ENCODE measurements at regions of chr15 and their contacts with region 1.

Region 1: GRCh38 chr15:34514251-34514670 is 69.2 kb downstream of the GOLGA8B start:
- DNase-seq: no peak
- ATAC-seq: peak; percentile 81
- H3K4me3 ChIP-seq: peak overlapping the region; percentile 52 to 81 (median 73)
- H3K27ac ChIP-seq: peak overlapping the region; percentile 38
- H3K4me1 ChIP-seq: peaks cover 33% of the 10 kb centered on the region
- H3K27me3 ChIP-seq: no peaks in the 10 kb centered on the region; a peak in 3 of 5 replicates
- CTCF ChIP-seq: no peak
- EP300 ChIP-seq: no peak
- POLR2A ChIP-seq: no peak
- RAD21 ChIP-seq: no peak

Region 2: DNA sequence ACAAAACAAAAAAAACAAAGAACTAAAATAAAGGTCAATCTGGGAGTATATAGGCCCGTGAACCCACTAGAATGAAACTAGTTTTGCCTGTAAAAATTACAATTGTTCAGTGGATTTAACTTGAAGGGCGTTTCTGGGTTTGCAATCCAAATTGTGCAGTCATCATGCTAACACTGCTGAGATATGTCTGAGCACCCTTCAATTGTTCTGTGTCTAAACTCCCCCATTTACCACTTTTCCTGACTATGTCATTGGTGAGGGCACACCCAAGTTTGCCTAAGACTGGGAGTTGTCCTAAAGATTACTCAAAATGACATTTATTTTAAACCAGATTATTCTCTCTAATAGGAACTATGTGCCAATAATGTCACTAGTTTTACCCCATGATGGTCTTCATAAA is 234.9 kb before region 1 on chr15:
- CTCF ChIA-PET with region 1: no interaction called
- POLR2A ChIA-PET with region 1: no interaction called
- in situ Hi-C with region 1: no loop called
- intact Hi-C with region 1: no loop called
- DNase-seq: no peak
- ATAC-seq: no peak
- H3K4me3 ChIP-seq: no peak overlapping the region
- H3K27ac ChIP-seq: no peak overlapping the region
- H3K4me1 ChIP-seq: no peaks in the 10 kb centered on the region
- H3K27me3 ChIP-seq: no peaks in the 10 kb centered on the region
- CTCF ChIP-seq: no peak
- EP300 ChIP-seq: no peak
- POLR2A ChIP-seq: no peak
- RAD21 ChIP-seq: no peak

Region 3: GRCh38 chr15:34470091-34470490 is 44.2 kb before region 1 on chr15:
- CTCF ChIA-PET with region 1: no interaction called
- POLR2A ChIA-PET with region 1: no interaction called
- in situ Hi-C with region 1: no loop called
- intact Hi-C with region 1: no loop called
- DNase-seq: no peak
- ATAC-seq: no peak
- H3K4me3 ChIP-seq: no peak overlapping the region
- H3K27ac ChIP-seq: no peak overlapping the region
- H3K4me1 ChIP-seq: peaks cover 18% of the 10 kb centered on the region
- H3K27me3 ChIP-seq: peaks cover 0 to 1% of the 10 kb centered on the region in 2 experiments; a peak in 1 of 5 replicates
- CTCF ChIP-seq: no peak
- EP300 ChIP-seq: no peak
- POLR2A ChIP-seq: no peak
- RAD21 ChIP-seq: no peak

Region 4: DNA sequence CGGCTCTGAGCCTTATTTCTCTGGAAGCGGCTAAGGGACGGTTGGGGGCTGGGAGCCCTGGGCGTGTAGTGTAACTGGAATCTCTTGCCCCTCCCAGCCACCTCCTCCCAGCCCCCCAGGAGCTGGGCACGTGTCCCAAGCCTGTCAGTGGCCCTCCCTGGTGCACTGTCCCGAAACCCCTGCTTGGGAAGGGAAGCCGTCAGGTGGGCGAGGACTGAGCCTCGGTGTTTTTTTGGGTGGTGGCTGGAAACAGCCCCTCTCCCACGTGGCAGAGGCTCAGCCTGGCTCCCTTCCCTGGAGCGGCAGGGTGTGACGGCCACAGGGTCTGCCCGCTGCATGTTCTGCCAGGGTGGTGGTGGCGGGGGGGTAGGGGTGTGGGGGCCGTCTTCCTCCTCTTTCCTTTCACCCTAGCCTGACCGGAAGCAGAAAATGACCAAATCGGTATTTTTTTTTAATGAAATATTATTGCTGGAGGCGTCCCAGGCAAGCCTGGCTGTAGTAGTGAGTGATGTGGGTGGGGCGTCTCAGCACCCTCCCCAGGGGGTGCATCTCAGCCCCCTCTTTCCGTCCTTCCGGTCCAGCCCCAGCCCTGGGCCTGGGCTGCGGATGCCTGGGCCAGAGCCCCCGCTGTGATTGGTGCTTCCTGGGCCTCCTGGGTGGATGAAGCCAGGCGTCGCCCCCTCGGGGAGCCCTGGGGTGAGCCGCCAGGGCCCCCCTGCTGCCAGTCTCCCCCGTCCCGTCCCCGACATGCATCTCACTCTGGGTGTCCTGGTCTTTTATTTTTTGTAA is 17.9 kb before region 1 on chr15:
- CTCF ChIA-PET with region 1: no interaction called
- POLR2A ChIA-PET with region 1: no interaction called
- in situ Hi-C with region 1: no loop called
- intact Hi-C with region 1: no loop called
- DNase-seq: no peak
- ATAC-seq: no peak
- H3K4me3 ChIP-seq: no peak overlapping the region
- H3K27ac ChIP-seq: no peak overlapping the region
- H3K4me1 ChIP-seq: no peaks in the 10 kb centered on the region
- H3K27me3 ChIP-seq: no peaks in the 10 kb centered on the region
- CTCF ChIP-seq: no peak
- EP300 ChIP-seq: no peak
- POLR2A ChIP-seq: no peak
- RAD21 ChIP-seq: no peak

Region 5: DNA sequence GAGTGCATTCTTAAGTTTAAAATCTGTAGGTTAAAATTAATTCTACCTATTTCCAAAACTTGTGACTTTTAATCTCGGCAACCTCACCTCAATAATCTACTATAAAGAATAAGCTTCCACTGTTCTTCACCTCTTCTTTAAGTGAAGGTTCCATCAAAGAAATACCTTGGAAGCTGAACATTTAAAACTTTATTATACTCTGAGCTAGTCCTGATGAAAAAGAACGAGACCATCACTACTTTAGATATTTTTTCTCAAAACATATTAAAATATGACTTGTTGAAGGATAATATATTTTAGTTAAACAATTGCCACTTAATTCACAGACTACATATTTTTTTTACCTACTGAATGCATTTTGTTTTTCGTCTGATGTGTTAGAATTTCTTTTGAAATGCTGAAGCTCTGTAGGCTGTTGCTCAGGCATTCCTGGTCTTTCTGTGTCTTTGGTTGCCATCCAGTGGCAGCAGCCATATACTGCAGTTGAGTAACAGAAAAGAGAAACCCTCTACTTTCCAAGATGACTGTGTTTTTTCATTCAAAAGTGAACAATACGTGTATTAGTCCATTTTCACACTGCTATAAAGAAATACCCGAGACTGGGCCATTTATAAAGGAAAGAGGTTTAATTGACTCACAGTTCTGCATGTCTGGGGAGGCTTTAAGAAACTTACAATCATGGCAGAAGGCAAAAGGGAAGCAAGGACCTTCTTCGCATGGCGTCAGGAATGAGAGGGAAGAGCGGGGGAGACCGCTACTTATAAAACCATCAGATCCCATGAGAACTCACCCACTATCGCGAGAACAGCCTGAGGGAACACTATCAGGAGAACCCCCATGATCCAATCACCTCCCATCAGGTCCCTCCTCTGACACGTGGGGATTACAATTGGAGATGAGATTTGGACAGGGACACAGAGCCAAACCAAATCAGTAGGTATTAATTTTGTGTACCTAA is 73.7 kb after region 1 on chr15:
- CTCF ChIA-PET with region 1: no interaction called
- POLR2A ChIA-PET with region 1: interaction called, 19 read pairs
- in situ Hi-C with region 1: no loop called
- intact Hi-C with region 1: loop called (anchors 2 kb)
- DNase-seq: peak; percentile 80
- ATAC-seq: peak; percentile 42
- H3K4me3 ChIP-seq: peak overlapping the region; percentile 19 to 44 (median 40); a peak in 1 of 6 replicates
- H3K27ac ChIP-seq: no peak overlapping the region
- H3K4me1 ChIP-seq: peaks cover 12% of the 10 kb centered on the region; the same call in 1 of the 2 replicates
- H3K27me3 ChIP-seq: no peaks in the 10 kb centered on the region
- CTCF ChIP-seq: peak; percentile 85
- EP300 ChIP-seq: no peak
- POLR2A ChIP-seq: peak; percentile 78 to 95
- RAD21 ChIP-seq: peak; percentile 67